Activated B cell treated with CpG ODN at 0.5 μM for 24 hours (primary cell): ENCODE measurements at regions of chr9 and their contacts with region 1.

Region 1: DNA sequence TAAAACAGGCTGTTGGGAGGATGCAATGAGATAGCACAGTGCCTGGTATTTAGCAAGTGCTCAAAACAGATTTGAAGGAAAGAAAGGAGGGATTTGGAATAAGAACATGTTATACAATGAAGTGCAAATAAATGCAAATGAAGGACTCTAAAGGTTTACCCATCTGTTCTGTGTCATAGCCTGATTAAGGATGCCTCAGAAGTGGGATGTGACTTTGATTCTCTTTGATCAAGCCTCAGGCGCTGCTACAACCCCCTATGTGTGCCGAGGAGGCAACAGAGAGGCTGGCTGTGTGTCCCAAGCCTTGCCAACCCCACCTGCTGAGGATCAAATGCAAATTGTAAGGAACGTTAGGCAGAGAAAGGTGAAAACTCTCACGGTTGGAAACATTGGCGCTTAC is 27.2 kb downstream of the GGTA1 start:
- DNase-seq: no peak
- ATAC-seq: no peak
- H3K4me3 Mint-ChIP-seq: no peak overlapping the region
- H3K27ac Mint-ChIP-seq: no peak overlapping the region
- H3K4me1 Mint-ChIP-seq: no peaks in the 10 kb centered on the region
- H3K27me3 Mint-ChIP-seq: peaks cover 21% of the 10 kb centered on the region
- CTCF ChIP-seq: no peak

Region 2: GRCh38 chr9:121566481-121567465 is 94.3 kb after region 1 on chr9:
- CTCF ChIA-PET with region 1: no interaction called
- POLR2A ChIA-PET with region 1: no interaction called
- intact Hi-C with region 1: no loop called
- DNase-seq: no peak
- ATAC-seq: no peak
- H3K4me3 Mint-ChIP-seq: no peak overlapping the region
- H3K27ac Mint-ChIP-seq: no peak overlapping the region
- H3K4me1 Mint-ChIP-seq: no peaks in the 10 kb centered on the region
- H3K27me3 Mint-ChIP-seq: peaks cover 25% of the 10 kb centered on the region
- CTCF ChIP-seq: no peak

Region 3: DNA sequence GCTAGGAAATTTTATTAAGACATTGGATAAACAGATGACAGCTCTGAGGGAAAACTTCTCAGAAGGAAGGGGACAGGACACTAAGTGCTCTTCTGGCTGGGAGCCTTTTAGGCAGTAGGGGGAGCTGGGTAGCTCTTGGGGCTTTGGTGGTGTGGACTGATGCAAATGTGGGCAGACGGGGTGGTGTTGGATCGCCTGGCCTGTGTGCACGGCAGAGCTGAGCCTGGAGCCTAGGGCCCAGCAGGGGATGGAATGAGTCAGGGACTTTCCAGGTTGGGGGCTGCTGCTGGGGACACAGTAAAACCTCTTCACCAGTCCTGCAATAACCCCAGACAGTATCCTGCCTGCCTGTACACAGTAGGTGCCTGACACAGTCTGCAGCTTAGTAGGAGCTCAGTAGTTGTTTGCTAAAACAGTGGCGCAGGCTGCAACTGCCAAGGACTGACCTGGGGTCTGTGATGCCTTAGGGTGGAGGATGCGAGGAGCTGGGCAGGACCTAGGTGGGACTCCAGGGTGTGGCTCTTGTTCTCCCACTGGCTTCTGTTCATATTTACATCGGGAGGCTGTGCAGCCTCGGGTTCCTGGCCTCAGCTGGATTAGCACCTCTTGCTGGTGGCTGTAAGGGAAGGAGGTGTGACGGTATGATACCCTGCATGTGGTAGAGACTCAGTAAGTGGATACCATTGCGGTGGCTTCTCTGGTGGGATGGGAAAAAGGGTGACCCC is 262.8 kb after region 1 on chr9:
- CTCF ChIA-PET with region 1: no interaction called
- POLR2A ChIA-PET with region 1: interaction called, 10 read pairs
- intact Hi-C with region 1: no loop called
- DNase-seq: no peak
- ATAC-seq: peak; percentile 75
- H3K4me3 Mint-ChIP-seq: peak overlapping the region; percentile 3
- H3K27ac Mint-ChIP-seq: no peak overlapping the region
- H3K4me1 Mint-ChIP-seq: peaks cover 15% of the 10 kb centered on the region
- H3K27me3 Mint-ChIP-seq: peaks cover 20% of the 10 kb centered on the region
- CTCF ChIP-seq: no peak